ENCODE measurements at regions of chr5 and their contacts with region 1.

Region 1: GRCh38 chr5:179763215-179763945 is 30.4 kb upstream of the LTC4S start:
- DNase-seq: peak; percentile 75 to 84 (median 79)
- ATAC-seq: peak; percentile 82
- H3K4me3 ChIP-seq: no peak overlapping the region
- H3K27ac ChIP-seq: no peak overlapping the region
- H3K4me1 ChIP-seq: peaks cover 27 to 52% of the 10 kb centered on the region in 2 experiments
- H3K27me3 ChIP-seq: no peaks in the 10 kb centered on the region
- CTCF ChIP-seq: peak; percentile 87 to 99 (median 98)
- EP300 ChIP-seq: no peak
- POLR2A ChIP-seq: no peak
- RAD21 ChIP-seq: peak; percentile 73 to 79

Region 2: DNA sequence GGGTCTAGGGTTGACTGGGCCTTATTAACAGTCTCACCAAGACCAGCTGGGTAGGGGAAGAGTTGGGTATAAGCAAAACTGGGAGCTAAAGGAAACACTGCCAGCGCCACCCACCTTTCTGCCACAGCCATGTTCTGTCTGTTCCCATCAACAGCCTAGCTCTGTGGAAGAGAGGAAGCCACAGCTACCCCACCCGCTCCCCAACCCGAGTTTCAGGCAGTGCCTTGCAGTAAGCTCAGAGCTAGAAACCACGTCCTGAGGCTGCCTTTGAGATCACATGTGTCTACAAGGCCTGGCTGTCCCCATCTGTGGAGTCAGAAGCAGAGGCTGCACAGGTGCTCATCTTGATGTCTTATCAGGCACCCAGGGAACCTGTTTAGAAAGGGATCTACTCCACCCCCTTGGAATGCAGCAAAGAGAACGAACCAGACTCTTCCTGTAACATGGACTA is 155.2 kb before region 1 on chr5:
- CTCF ChIA-PET with region 1: no interaction called
- POLR2A ChIA-PET with region 1: no interaction called
- in situ Hi-C with region 1: no loop called
- intact Hi-C with region 1: no loop called
- DNase-seq: peak in 1 of 4 experiments; percentile 9
- ATAC-seq: peak; percentile 4
- H3K4me3 ChIP-seq: no peak overlapping the region
- H3K27ac ChIP-seq: no peak overlapping the region
- H3K4me1 ChIP-seq: peaks cover 10 to 25% of the 10 kb centered on the region in 2 experiments; a peak in 4 of 5 replicates
- H3K27me3 ChIP-seq: no peaks in the 10 kb centered on the region
- CTCF ChIP-seq: no peak
- EP300 ChIP-seq: no peak
- POLR2A ChIP-seq: peak; percentile 22; the same call in 1 of the 2 replicates
- RAD21 ChIP-seq: no peak

Region 3: DNA sequence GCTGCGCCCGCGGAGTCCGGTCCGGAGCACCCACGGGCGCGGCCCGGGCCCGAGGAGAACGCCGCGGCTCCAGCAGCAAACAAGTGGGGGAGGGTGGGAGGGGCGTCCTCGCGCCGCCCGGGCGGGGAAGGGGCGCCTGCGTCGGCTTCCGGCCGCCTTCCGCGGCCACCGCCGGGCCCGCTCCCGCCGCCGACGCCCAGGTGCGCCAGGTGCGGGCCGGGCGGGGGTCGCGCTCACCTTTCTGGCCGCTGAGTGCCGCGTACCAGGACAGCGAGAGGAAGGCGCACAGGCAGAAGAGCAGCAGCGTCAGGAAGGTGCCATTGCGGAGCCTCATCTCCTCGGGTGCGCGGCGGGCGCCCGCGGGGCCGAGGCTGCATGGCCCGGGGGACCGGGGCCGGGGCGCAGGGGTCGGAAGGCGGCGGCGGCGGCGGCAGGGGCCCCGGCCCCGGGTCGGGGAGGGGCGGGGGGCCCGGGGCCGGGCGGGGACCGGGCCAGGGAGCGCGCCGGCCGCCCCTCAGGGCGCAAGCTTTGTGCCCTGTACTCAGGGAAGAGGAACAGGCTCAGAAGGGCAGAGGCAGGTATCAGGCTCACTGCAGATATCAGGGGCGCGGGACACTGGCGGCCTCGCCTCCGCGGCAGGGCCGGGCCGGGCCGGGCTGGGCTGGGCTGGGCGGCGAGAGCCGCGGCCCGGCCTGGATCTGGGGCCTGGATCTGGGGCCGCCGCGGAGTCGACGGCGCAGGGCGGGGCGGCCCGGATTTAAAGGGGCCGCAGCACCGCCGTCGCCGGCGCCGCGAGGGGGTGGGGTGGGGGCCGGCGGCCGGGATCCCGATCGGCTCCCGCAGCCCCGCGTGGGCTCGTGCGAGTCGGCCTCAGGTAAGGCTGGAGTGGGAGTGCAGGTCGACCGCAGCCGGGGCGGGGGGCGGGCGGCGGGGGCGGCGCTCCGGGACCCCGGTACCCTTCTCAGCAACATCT is 43.2 kb after region 1 on chr5 and contains the start of gene MGAT4B:
- CTCF ChIA-PET with region 1: interaction called, 3 read pairs
- POLR2A ChIA-PET with region 1: interaction called, 3 read pairs
- in situ Hi-C with region 1: no loop called
- intact Hi-C with region 1: loop called (anchors 5 kb)
- DNase-seq: peak; percentile 80 to 91 (median 84)
- ATAC-seq: peak; percentile 82
- H3K4me3 ChIP-seq: peak within 1 kb of the TSS; percentile 76
- H3K27ac ChIP-seq: peak within 1 kb of the TSS; percentile 88
- H3K4me1 ChIP-seq: peaks cover 23 to 61% of the 10 kb centered on the region in 2 experiments
- H3K27me3 ChIP-seq: no peaks in the 10 kb centered on the region
- CTCF ChIP-seq: no peak
- EP300 ChIP-seq: no peak
- POLR2A ChIP-seq: no peak
- RAD21 ChIP-seq: no peak
- polyA plus RNA-seq, gene MGAT4B: 0.34 to 0.37 TPM

Measured in K562 (cell line).